ENCODE measurements at regions of chr18 and their contacts with region 1.

Region 1: GRCh38 chr18:22705328-22705727 is 227.8 kb upstream of the RBBP8 start:
- DNase-seq: peak; percentile 41
- H3K4me3 ChIP-seq: no peak overlapping the region
- H3K27ac ChIP-seq: no peak overlapping the region
- H3K4me1 ChIP-seq: peaks cover 11% of the 10 kb centered on the region
- H3K27me3 ChIP-seq: no peaks in the 10 kb centered on the region
- CTCF ChIP-seq: no peak

Region 2: GRCh38 chr18:21612125-21612991 is 1093.0 kb before region 1 on chr18 and contains the start of gene SNRPD1:
- CTCF ChIA-PET with region 1: no interaction called
- POLR2A ChIA-PET with region 1: no interaction called
- intact Hi-C with region 1: no loop called
- DNase-seq: peak; percentile 96
- H3K4me3 ChIP-seq: peak within 1 kb of the TSS; percentile 67
- H3K27ac ChIP-seq: peak within 1 kb of the TSS; percentile 93
- H3K4me1 ChIP-seq: no peaks in the 10 kb centered on the region
- H3K27me3 ChIP-seq: no peaks in the 10 kb centered on the region
- CTCF ChIP-seq: peak; percentile 96
- total RNA-seq, gene SNRPD1: 164 and 167 TPM in 2 replicates

Region 3: GRCh38 chr18:21914739-21915319 is 790.5 kb before region 1 on chr18:
- CTCF ChIA-PET with region 1: no interaction called
- POLR2A ChIA-PET with region 1: no interaction called
- intact Hi-C with region 1: loop called (anchors 5 kb)
- DNase-seq: peak; percentile 74
- H3K4me3 ChIP-seq: no peak overlapping the region
- H3K27ac ChIP-seq: no peak overlapping the region
- H3K4me1 ChIP-seq: no peaks in the 10 kb centered on the region
- H3K27me3 ChIP-seq: peaks cover 19% of the 10 kb centered on the region
- CTCF ChIP-seq: peak; percentile 72

Region 4: GRCh38 chr18:22363867-22364463 is 341.4 kb before region 1 on chr18:
- CTCF ChIA-PET with region 1: no interaction called
- POLR2A ChIA-PET with region 1: no interaction called
- intact Hi-C with region 1: no loop called
- DNase-seq: no peak
- H3K4me3 ChIP-seq: no peak overlapping the region
- H3K27ac ChIP-seq: no peak overlapping the region
- H3K4me1 ChIP-seq: no peaks in the 10 kb centered on the region
- H3K27me3 ChIP-seq: peaks cover 82% of the 10 kb centered on the region
- CTCF ChIP-seq: no peak

Region 5: GRCh38 chr18:22542401-22542835 is 162.9 kb before region 1 on chr18:
- CTCF ChIA-PET with region 1: no interaction called
- POLR2A ChIA-PET with region 1: no interaction called
- intact Hi-C with region 1: no loop called
- DNase-seq: no peak
- H3K4me3 ChIP-seq: no peak overlapping the region
- H3K27ac ChIP-seq: no peak overlapping the region
- H3K4me1 ChIP-seq: no peaks in the 10 kb centered on the region
- H3K27me3 ChIP-seq: peaks cover 18% of the 10 kb centered on the region
- CTCF ChIP-seq: no peak

Measured in A673 (cell line).